Head of caudate nucleus (tissue), 42 donors: ENCODE measurements at regions of chr13 and their contacts with region 1.

Region 1: DNA sequence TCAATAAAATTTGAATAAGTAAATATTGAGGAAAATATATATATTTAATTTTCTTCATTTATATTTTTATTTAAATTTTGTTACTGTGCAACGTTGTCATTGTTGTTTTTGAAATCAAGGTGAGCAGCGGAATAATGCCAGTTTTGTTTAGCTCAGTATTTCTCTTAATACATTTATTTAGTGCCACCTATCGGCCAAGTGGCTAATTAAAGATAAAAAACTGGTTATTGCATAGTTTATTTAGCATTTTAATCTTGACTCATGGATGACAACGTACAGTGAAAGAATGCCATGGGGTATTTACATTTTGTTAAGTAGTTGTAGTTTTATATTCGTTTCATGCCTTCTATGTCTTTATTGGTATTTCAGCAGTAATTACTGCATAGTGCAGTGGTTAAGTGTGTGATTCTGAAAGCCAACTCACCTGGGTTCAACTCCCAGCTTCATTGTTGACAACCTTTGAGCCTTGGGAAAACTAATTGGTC is 265.9 kb downstream of the MYO16 start:
- DNase-seq: peak in 5 of 42 donors; percentile 9 to 44 (median 15)

Region 2: GRCh38 chr13:108322206-108322824 is 572.9 kb before region 1 on chr13:
- intact Hi-C with region 1: loop called (anchors 10 kb)
- DNase-seq: peak in 2 of 42 donors; percentile 15 to 35

Region 3: DNA sequence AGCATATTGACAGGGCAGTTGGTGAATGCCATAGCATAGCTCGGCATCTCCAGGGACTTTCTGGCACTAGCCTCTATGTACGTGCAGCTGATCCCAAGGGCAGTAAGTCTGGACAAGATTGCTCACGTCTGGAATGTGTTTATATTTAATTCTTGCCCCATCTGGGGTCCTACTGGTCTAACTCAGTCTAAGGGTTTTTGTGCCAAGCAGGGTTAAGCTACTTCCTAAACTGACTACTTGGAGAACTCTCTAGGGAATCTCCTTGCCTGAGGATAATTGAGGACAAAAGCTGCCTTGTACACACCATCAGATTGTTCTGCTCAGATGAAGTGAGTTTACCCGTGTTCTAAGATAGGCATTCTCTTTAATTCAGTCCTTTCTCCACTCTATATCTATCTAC is 92.3 kb after region 1 on chr13:
- intact Hi-C with region 1: no loop called
- DNase-seq: no peak

Region 4: GRCh38 chr13:109026266-109026665 is 131.0 kb after region 1 on chr13:
- intact Hi-C with region 1: no loop called
- DNase-seq: no peak